Activated CD4-positive, alpha-beta memory T cell treated with anti-CD3 and anti-CD28 coated beads for 36 hours (primary cell): ENCODE measurements at regions of chr12 and their contacts with region 1.

Region 1: GRCh38 chr12:93419388-93420034 is 22.2 kb downstream of the UBE2N start:
- DNase-seq: no peak
- H3K4me3 Mint-ChIP-seq: no peak overlapping the region
- H3K27ac Mint-ChIP-seq: no peak overlapping the region
- H3K4me1 Mint-ChIP-seq: peaks cover 85% of the 10 kb centered on the region
- H3K27me3 Mint-ChIP-seq: no peaks in the 10 kb centered on the region

Region 2: GRCh38 chr12:93025145-93025805 is 394.2 kb before region 1 on chr12:
- CTCF ChIA-PET with region 1: interaction called, 3 read pairs
- POLR2A ChIA-PET with region 1: no interaction called
- intact Hi-C with region 1: loop called (anchors 5 kb)
- DNase-seq: no peak
- H3K4me3 Mint-ChIP-seq: no peak overlapping the region
- H3K27ac Mint-ChIP-seq: no peak overlapping the region
- H3K4me1 Mint-ChIP-seq: no peaks in the 10 kb centered on the region
- H3K27me3 Mint-ChIP-seq: no peaks in the 10 kb centered on the region

Region 3: GRCh38 chr12:93347054-93347776 is 72.3 kb before region 1 on chr12:
- CTCF ChIA-PET with region 1: no interaction called
- POLR2A ChIA-PET with region 1: no interaction called
- intact Hi-C with region 1: no loop called
- DNase-seq: no peak
- H3K4me3 Mint-ChIP-seq: no peak overlapping the region
- H3K27ac Mint-ChIP-seq: no peak overlapping the region
- H3K4me1 Mint-ChIP-seq: no peaks in the 10 kb centered on the region
- H3K27me3 Mint-ChIP-seq: no peaks in the 10 kb centered on the region

Region 4: DNA sequence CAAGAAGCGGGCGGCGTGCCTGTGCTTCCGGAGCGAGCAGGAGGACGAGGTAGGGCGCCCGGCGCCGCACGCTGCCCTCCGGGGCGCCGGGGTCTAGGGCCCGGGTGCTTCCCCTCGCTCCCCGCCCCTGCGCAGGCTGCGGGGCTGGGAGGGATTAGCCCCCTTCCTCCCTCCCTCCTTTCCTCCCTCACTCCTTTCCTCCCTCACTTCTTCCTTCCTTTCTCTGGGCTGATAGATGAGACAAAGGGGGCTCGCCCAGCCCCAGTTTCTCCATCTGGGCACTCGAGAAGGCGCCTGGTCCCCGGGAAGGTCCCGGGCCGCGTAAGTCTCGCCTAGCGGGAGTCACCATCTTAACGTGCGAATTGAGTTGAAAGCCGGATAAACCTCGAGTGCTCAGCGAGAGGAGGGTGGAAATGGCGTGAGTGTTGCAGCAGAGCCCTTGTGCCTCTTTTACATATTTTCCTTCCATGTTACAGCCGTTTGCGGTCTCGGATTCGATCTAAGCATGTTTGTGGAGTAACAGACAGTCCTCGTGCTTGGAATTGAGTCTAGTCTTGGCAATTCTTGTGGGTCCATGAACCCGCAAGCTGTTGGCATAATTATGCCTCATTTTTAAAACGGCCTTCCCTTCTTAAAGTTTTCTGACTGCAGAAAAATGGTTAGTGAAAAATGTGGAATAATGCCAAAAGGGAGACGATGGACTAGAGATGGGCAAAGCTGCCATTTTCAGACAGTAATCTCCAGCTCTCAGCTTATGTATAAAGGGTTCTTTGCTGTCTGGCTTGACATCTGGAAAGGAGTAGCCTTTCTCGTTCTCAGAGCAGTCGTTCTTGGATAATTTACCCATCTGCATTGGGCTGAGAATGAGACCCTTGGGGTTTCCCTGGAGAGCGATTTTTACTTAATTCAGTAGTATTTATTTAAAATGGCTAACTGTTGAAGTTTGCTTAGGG is 40.9 kb before region 1 on chr12:
- CTCF ChIA-PET with region 1: interaction called, 27 read pairs
- POLR2A ChIA-PET with region 1: no interaction called
- intact Hi-C with region 1: loop called (anchors 2 kb)
- DNase-seq: peak; percentile 74
- H3K4me3 Mint-ChIP-seq: peak overlapping the region; percentile 99
- H3K27ac Mint-ChIP-seq: peak overlapping the region; percentile 99
- H3K4me1 Mint-ChIP-seq: peaks cover 40% of the 10 kb centered on the region
- H3K27me3 Mint-ChIP-seq: no peaks in the 10 kb centered on the region

Region 5: DNA sequence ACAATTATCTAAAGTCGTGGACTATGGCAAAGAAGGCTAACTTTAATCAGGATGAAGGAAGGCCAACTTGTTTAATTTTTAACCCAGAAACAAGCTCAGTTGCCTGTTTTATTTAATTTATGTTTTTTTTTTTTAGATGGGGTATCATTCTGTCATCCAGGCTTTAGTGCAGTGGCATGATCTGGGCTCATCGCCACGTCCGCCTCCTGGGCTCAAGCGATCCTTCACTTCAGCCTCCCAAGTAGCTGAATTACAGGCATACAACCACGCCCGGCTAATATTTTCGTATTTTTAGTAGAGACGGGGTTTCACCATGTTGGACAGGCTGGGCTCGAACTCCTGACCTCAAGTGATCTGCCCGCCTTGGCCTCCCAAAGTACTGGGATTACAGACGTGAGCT is 22.1 kb before region 1 on chr12:
- CTCF ChIA-PET with region 1: interaction called, 26 read pairs
- POLR2A ChIA-PET with region 1: interaction called, 4 read pairs
- intact Hi-C with region 1: loop called (anchors 2 kb)
- DNase-seq: no peak
- H3K4me3 Mint-ChIP-seq: no peak overlapping the region
- H3K27ac Mint-ChIP-seq: no peak overlapping the region
- H3K4me1 Mint-ChIP-seq: peaks cover 6% of the 10 kb centered on the region
- H3K27me3 Mint-ChIP-seq: no peaks in the 10 kb centered on the region

Region 6: GRCh38 chr12:93441617-93442410 is 22.3 kb after region 1 on chr12 and contains the start of gene UBE2N:
- CTCF ChIA-PET with region 1: interaction called, 72 read pairs
- POLR2A ChIA-PET with region 1: interaction called, 28 read pairs
- intact Hi-C with region 1: no loop called
- DNase-seq: peak; percentile 97
- H3K4me3 Mint-ChIP-seq: peak within 1 kb of the TSS; percentile 94
- H3K27ac Mint-ChIP-seq: peak within 1 kb of the TSS; percentile 95
- H3K4me1 Mint-ChIP-seq: peaks cover 46% of the 10 kb centered on the region
- H3K27me3 Mint-ChIP-seq: no peaks in the 10 kb centered on the region
- total RNA-seq, gene UBE2N: 177 TPM

Region 7: DNA sequence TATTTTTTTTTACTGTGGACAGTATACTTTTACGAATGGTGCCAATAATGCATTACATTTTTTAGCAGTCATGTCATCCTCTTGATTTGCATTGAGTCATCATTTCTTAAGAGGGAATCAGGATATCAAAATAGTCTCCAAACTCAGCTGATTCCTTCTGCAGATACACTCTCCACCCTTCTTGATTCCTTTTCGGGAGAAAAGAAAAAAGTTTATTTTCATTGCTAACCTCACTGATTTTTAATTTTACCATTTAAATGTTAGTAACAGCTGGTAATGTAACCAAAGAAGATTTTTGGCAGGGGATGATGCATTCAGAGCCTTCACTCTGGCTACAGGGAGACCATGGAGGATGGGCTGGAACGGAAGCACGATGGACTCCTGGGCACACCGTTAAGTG is 95.3 kb after region 1 on chr12:
- CTCF ChIA-PET with region 1: no interaction called
- POLR2A ChIA-PET with region 1: no interaction called
- intact Hi-C with region 1: no loop called
- DNase-seq: no peak
- H3K4me3 Mint-ChIP-seq: no peak overlapping the region
- H3K27ac Mint-ChIP-seq: no peak overlapping the region
- H3K4me1 Mint-ChIP-seq: no peaks in the 10 kb centered on the region
- H3K27me3 Mint-ChIP-seq: no peaks in the 10 kb centered on the region

Region 8: DNA sequence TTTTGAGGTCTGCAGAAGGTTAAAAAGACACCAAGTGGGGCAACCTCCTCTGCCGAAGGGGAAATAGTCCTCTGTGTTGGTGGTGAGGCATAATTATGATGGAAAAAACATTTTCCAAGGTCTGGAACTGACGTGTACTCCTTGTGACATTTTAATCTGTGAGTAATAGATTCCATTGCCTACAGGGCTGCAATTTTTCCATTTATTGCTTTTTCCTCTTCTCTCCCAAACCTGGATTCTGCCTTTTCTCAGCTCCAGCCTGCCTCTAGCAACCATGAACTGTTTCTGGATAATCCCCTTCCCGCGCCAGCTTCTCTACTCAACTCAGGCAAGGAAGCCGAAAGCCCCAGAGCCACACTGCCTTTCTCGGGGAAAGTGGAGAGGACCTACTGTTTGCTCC is 498.8 kb after region 1 on chr12:
- CTCF ChIA-PET with region 1: no interaction called
- POLR2A ChIA-PET with region 1: no interaction called
- intact Hi-C with region 1: no loop called
- DNase-seq: no peak
- H3K4me3 Mint-ChIP-seq: no peak overlapping the region
- H3K27ac Mint-ChIP-seq: no peak overlapping the region
- H3K4me1 Mint-ChIP-seq: no peaks in the 10 kb centered on the region
- H3K27me3 Mint-ChIP-seq: no peaks in the 10 kb centered on the region